Mammary epithelial cell (primary cell): ENCODE measurements at regions of chr4 and their contacts with region 1.

Region 1: DNA sequence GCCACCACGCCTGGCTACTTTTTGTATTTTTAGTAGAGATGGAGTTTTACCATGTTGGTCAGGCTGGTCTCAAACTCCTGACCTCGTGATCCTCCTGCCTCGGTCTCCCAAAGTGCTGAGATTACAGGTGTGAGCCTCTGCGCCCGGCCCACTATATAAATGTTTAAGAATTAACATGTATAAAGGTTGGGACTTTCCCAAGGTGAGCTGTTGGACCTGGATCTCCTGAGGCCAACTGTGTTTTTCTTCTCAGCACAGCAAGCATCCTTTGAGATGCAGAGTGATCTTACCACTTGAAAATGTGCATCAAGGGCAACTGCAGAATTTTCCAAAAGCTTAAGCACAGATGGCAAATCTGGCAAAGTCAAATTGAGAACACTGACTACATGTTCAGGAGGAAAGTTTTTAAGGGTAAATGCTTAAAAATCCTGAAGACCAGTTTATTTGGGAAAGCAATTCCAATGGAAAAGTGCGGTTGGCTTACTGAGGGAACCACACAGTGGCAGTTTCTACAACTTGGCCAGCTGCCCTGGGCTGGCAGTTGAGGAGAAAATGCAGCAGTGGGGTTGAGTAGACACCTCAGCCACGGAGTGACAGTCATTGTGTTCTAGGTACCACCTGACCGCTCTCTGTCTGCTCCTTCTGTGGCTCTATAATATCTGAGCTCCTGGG is 168.9 kb downstream of the CBR4 start:
- DNase-seq: no peak
- H3K4me3 ChIP-seq: no peak overlapping the region
- H3K27ac ChIP-seq: peak overlapping the region; percentile 83
- H3K4me1 ChIP-seq: peaks cover 77% of the 10 kb centered on the region
- H3K27me3 ChIP-seq: no peaks in the 10 kb centered on the region
- CTCF ChIP-seq: no peak

Region 2: GRCh38 chr4:168784786-168785461 is 56.2 kb before region 1 on chr4:
- CTCF ChIA-PET with region 1: no interaction called
- dilution Hi-C with region 1: loop called (anchors 5 kb)
- in situ Hi-C with region 1: no loop called
- intact Hi-C with region 1: no loop called
- DNase-seq: peak; percentile 95
- H3K4me3 ChIP-seq: peak overlapping the region; percentile 8 to 17 (median 12)
- H3K27ac ChIP-seq: peak overlapping the region; percentile 91
- H3K4me1 ChIP-seq: peaks cover 25% of the 10 kb centered on the region
- H3K27me3 ChIP-seq: no peaks in the 10 kb centered on the region
- CTCF ChIP-seq: no peak

Region 3: DNA sequence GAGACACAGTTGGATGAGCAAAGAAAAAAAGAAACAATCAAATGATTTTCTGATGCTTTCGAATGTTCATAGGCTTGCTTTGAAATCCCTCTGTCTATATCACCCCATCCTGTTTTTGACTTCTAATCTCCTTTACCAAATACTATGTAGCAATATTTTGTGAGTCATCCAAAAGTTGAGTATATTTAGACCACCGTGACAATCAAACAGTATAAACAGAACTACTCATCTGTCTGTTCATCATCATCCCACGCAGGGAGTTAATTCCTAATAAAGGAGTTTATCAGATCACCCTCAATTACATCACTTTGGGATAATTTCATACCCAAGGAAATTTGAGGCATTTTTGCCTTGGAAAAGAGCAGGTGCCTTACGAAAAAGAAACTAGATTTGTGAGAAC is 44.0 kb before region 1 on chr4:
- CTCF ChIA-PET with region 1: no interaction called
- dilution Hi-C with region 1: no loop called
- in situ Hi-C with region 1: no loop called
- intact Hi-C with region 1: no loop called
- DNase-seq: peak; percentile 84
- H3K4me3 ChIP-seq: no peak overlapping the region
- H3K27ac ChIP-seq: peak overlapping the region; percentile 87
- H3K4me1 ChIP-seq: peaks cover 28% of the 10 kb centered on the region
- H3K27me3 ChIP-seq: no peaks in the 10 kb centered on the region
- CTCF ChIP-seq: no peak